PC-3 (cell line): ENCODE measurements at regions of chr9 and their contacts with region 1.

Region 1: GRCh38 chr9:103226647-103227013 is 231.5 kb downstream of the CYLC2 start:
- DNase-seq: no peak
- ATAC-seq: no peak
- H3K4me3 ChIP-seq: no peak overlapping the region
- H3K27ac ChIP-seq: no peak overlapping the region
- H3K4me1 ChIP-seq: no peaks in the 10 kb centered on the region
- H3K27me3 ChIP-seq: no peaks in the 10 kb centered on the region
- CTCF ChIP-seq: no peak

Region 2: DNA sequence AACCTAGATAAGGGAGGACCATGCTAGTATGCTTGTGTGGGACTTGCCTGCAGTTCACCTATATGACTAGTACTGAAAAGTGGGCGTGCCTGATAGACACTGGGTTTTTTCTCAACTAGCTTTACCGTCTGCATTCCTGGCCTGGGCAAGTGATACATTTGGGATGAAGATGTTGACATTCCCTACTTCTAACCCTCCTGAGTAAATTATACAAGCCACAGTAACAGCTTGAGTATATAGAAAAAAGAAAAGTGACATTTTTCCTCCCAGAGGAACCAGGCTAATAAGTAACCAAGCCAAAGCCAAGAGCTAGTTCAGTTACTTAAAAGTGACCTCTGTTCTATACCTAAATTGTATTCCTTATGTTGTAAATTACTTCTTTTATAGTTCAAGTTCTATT is 385.3 kb before region 1 on chr9:
- CTCF ChIA-PET with region 1: no interaction called
- POLR2A ChIA-PET with region 1: interaction called, 14 read pairs
- intact Hi-C with region 1: no loop called
- DNase-seq: no peak
- ATAC-seq: no peak
- H3K4me3 ChIP-seq: no peak overlapping the region
- H3K27ac ChIP-seq: no peak overlapping the region
- H3K4me1 ChIP-seq: no peaks in the 10 kb centered on the region
- H3K27me3 ChIP-seq: no peaks in the 10 kb centered on the region
- CTCF ChIP-seq: no peak